ENCODE measurements at regions of chr19 and their contacts with region 1.

Region 1: DNA sequence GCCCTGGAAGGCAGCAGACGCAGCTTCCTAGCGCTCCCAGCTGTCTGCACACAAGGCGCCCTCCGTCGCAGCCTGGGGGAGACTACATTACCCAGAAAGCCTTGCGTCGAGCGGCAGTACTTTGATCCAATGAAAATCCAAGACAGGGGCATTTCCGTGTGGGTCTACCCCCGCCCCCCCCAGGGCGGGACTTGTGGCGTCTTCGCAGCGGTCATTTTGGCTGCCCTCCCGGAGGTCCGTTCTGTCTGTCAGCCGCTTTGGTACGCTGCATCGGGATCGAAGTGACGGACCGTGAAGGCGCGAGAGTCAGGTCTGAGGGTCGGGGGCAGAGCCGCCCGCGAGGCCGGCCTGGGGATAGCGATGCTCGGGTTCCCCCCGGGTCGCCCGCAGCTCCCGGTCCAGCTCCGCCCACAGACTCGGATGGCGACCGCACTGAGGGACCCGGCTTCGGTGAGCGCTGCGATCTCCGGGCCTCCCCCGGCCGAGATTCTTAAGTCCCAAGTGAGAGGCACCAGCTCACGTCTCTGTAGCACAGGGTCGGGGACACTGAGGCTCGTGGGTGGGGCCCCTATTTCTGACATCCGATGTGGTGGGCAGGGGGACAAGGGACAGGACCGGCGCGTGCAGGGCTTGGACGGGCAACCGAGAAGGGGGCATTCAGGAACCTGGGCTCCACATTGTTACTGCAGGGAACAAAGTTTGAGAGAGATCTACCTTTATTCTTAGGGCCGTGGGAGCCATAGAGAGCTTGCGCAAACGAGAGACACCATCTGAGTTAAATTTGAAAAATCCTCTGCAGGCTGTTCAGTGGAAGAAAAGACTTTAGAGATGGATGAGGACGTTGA is at the start of gene ZNF211:
- DNase-seq: peak; percentile 97
- ATAC-seq: peak; percentile 100
- total RNA-seq, gene ZNF211: 10.1 TPM

Region 2: GRCh38 chr19:57578487-57579205 is 54.6 kb before region 1 on chr19 and contains the start of gene ZNF416:
- intact Hi-C with region 1: loop called (anchors 2 kb)
- DNase-seq: peak; percentile 98
- ATAC-seq: peak; percentile 98
- total RNA-seq, gene ZNF416: 4.3 TPM

Region 3: DNA sequence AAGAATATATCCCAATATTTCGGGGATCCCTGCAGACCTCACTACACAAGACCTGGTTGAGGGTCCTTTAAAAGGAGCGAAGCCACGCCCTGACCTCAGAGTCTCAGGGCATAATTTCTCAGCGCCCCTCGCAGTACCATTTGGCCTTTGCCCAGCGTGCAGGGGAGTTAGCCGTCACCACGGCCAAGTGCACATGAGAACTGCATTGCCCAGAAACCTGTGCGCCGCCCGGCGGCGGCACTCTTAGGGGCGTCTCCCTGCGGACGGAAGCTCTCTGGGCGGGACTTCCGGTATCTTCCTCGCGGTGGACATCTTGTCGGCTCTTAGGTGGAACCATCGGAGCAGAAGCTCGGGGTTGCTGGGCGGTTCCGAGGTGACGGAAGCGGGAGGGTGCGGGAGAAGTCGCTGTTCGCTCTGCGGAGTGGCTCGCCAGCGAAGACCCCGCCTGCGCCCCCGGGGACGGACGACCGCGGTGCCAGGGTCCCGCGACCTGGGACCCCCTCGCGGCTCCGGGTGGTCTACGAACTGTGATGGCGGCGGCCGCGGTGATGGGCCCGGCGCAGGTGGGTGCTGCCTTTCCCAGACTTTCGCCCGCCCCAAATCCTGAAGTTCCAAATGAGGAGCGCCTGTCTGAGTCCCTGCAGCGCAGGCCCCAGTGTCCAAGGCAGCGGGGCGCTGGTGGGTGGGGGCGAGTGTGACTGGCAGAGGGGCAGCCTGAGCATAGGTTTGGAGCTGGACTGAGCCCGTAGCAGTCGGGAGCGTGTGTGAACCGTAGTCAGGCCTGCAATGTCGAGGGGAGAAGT is 19.1 kb before region 1 on chr19 and contains the start of gene ZNF134:
- intact Hi-C with region 1: loop called (anchors 2 kb)
- DNase-seq: peak; percentile 96
- ATAC-seq: peak; percentile 98
- total RNA-seq, gene ZNF134: 14.9 TPM